ENCODE measurements at regions of chr3 and their contacts with region 1.

Region 1: DNA sequence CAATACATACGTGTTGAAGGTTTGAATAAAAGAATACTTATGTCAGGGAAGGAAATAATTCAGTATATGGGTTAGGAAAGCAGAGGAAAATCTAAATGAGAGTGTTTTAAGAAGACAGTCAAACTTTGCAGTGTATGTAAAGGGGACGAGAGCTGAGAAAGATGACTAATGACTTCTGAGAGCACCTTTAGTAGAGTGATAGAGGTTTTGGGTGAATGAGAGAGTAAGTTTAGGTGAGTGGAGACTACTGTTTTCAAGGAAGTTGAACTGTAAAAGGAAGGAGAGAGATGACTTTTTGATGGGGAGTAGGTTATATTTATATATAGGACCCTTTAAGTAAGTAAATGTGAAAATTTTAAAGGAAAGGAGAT is 9.4 kb downstream of the TBC1D23 start:
- DNase-seq: no peak
- ATAC-seq: no peak
- H3K4me3 ChIP-seq: no peak overlapping the region
- H3K4me3 Mint-ChIP-seq: no peak overlapping the region
- H3K27ac ChIP-seq: no peak overlapping the region
- H3K27ac Mint-ChIP-seq: no peak overlapping the region
- H3K4me1 ChIP-seq: no peaks in the 10 kb centered on the region
- H3K4me1 Mint-ChIP-seq: peaks cover 41 to 61% (median 52%) of the 10 kb centered on the region in 3 donors
- H3K27me3 ChIP-seq: no peaks in the 10 kb centered on the region
- H3K27me3 Mint-ChIP-seq: no peaks in the 10 kb centered on the region

Region 2: GRCh38 chr3:100548053-100548452 is 277.9 kb after region 1 on chr3:
- CTCF ChIA-PET with region 1: no interaction called
- POLR2A ChIA-PET with region 1: interaction called in 1 of 2 experiments, 12 read pairs
- DNase-seq: no peak
- ATAC-seq: no peak
- H3K4me3 ChIP-seq: no peak overlapping the region
- H3K4me3 Mint-ChIP-seq: no peak overlapping the region
- H3K27ac ChIP-seq: no peak overlapping the region
- H3K27ac Mint-ChIP-seq: no peak overlapping the region
- H3K4me1 ChIP-seq: no peaks in the 10 kb centered on the region
- H3K4me1 Mint-ChIP-seq: no peaks in the 10 kb centered on the region
- H3K27me3 ChIP-seq: no peaks in the 10 kb centered on the region
- H3K27me3 Mint-ChIP-seq: peaks cover 13 to 22% of the 10 kb centered on the region in 2 donors